Spleen (tissue), 13 donors: ENCODE measurements at regions of chr10 and their contacts with region 1.

Region 1: DNA sequence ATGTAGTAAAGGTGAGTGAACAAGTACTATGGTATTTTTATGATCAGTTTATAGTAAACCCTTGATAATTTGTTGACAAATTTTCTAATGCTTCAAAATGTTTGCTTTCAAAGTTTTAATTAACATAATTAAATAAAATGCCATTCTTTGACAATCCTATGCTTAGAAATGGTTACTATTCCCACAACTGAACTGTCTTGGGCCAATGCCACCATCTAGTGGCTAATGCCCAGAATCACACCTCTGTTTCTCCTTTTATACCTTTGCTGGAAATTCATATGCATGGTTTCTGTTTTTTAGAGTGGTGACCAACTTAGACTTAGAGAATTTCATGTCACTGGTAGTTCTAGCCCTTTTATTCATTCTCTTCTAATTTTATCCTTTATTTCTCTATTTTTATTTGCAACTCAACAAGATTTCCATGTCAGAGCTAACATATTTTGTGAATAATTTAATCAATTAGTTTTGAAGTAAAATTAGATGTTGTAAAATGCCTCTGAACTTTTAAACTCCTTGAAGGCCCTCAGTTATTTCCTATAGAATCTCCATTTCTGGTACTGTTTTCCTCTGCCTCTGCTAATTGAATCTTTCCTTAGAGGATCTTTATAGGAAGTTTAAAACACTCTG is 31.1 kb downstream of the PCGF5 start:
- DNase-seq: peak; percentile 16
- H3K4me3 ChIP-seq: no peak overlapping the region
- H3K27ac ChIP-seq: no peak overlapping the region
- H3K4me1 ChIP-seq: peaks cover 0 to 33% (median 0%) of the 10 kb centered on the region in 6 donors
- H3K27me3 ChIP-seq: no peaks in the 10 kb centered on the region
- CTCF ChIP-seq: peak; percentile 71 to 95 (median 89)
- POLR2A ChIP-seq: no peak

Region 2: DNA sequence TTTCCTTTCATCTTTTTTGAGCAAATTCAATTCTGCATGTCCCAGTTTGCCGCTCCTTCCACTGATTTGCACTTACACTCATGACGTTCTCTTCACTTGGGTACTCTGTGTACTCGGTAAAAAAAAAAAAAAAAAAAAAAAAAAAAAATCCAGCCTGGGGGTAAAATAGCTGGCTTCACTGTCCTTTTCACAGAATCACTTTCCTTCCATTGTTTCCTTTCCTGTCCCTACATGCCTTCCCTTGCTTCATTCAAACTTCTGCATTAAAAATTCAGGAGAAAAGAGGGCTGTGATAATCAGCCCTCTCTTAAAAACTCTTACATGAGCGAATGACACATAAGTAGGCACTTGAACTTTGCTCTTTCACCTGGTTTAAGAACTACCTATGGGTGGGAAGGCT is 339.4 kb before region 1 on chr10:
- intact Hi-C with region 1: loop called (anchors 5 kb)
- DNase-seq: no peak
- H3K4me3 ChIP-seq: no peak overlapping the region
- H3K27ac ChIP-seq: no peak overlapping the region
- H3K4me1 ChIP-seq: peaks cover 0 to 14% (median 6%) of the 10 kb centered on the region in 6 donors
- H3K27me3 ChIP-seq: no peaks in the 10 kb centered on the region
- CTCF ChIP-seq: no peak
- POLR2A ChIP-seq: no peak

Region 3: DNA sequence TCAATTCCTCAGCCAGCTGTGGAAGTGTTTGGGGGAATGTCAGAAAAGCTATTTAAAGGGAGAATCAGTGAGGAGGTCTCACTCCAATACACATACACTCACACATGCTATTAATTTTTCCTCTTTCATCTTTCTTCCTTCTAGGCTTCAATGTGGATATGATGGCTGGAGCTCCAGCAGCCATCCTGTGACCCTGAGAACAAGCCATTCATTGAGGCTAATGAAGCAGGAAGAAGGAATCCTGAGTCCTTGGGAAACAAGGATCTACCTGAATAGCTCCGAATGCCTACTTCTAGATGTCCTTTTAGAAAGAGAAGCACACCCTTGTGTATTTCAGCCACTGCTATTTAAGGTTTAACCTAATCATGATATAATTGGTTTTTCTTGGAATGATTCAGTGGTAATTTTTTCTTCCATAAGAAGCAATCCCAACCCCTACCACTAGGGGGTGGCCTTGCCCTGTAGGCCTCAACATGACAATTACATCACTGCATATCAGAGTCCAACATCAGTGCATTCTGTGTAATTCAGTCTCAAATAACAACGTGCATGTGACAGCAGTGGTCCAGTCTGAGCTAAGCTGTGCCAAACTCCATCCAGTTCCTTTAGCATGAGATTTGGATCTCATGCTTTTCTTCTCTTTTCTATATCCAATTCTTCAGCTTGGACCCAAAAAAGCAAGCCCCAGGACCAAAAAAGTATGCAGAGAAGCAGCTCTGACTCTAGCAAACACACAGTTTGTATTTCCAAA is 245.4 kb before region 1 on chr10:
- intact Hi-C with region 1: loop called (anchors 5 kb)
- DNase-seq: peak; percentile 79
- H3K4me3 ChIP-seq: peak overlapping the region in 1 of 8 donors; percentile 10
- H3K27ac ChIP-seq: peak overlapping the region in 7 of 8 donors; percentile 1 to 74 (median 53)
- H3K4me1 ChIP-seq: peaks cover 0 to 39% (median 14%) of the 10 kb centered on the region in 6 donors
- H3K27me3 ChIP-seq: no peaks in the 10 kb centered on the region
- CTCF ChIP-seq: peak; percentile 71 to 93 (median 90)
- POLR2A ChIP-seq: no peak

Region 4: DNA sequence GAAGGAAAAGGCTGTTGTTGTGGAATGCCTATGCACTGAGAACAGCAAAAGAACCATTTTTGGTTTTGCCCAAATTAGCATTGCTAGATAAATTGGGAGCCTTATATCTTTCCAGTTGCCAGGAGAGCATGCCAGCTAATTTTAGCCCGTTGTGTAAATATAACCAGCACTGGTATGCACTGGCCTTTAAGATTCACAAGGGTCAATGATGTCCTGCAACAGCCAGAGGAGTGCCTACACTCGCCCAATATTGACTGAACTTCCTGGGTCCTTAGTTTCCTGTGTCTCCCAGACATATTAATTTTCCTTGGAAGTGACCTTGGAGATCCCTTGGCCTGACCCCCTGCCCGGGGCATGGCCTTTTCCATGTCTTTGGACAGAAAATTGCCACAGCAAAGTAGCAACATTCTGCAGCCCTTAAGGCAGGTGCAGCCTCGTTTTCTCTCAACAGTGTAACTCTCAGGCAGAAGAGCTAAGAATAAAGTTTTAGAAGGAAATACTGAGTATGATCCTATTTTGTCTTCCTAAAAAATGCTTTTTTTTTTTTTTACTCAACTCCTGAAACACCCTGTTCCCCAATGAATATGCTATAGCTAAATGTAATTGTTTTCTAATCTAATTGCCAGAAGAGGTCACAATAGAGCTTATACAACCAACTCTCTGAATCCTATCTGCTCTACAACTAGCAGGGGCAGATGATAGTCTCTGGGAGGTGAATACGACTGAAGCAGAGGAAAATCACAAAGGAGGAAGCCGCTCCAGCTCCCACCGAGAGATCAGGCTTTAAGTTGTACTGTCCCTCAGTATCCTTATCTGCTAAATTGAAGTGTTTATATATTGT is 163.0 kb before region 1 on chr10:
- intact Hi-C with region 1: loop called (anchors 5 kb)
- DNase-seq: no peak
- H3K4me3 ChIP-seq: no peak overlapping the region
- H3K27ac ChIP-seq: no peak overlapping the region
- H3K4me1 ChIP-seq: no peaks in the 10 kb centered on the region
- H3K27me3 ChIP-seq: no peaks in the 10 kb centered on the region
- CTCF ChIP-seq: peak in 5 of 11 experiments; percentile 19 to 34 (median 20)
- POLR2A ChIP-seq: no peak

Region 5: DNA sequence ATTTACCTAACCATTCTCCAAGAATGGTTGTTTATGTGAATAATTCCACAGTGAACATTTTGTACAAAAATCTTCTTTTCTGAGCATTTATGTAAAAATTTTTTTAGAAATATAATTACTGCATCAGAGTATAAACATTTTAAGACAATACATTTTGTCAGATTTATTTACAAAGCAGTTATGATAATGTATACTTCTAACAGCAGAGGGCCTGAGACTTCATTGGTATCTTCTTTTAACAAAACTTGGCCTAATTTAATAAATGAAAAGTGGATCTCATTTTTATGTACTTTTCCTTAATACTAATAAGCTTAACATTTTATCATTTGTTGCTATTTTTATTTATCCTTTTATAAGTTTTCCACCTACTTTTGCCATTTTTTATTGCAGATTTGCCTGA is 228.0 kb after region 1 on chr10:
- intact Hi-C with region 1: no loop called
- DNase-seq: no peak
- H3K4me3 ChIP-seq: no peak overlapping the region
- H3K27ac ChIP-seq: no peak overlapping the region
- H3K4me1 ChIP-seq: no peaks in the 10 kb centered on the region
- H3K27me3 ChIP-seq: no peaks in the 10 kb centered on the region
- CTCF ChIP-seq: no peak
- POLR2A ChIP-seq: no peak